Activated T-helper 2 cell treated with anti-CD3 and anti-CD28 coated beads, Interferon-gamma antibody, Interleukin-2, Interleukin-4, amounts not matched to agents 10 μg/mL and 5 μg/mL and 100 μg/mL, durations not matched to agents 14 hours and 24 hours and 36 hours (primary cell): ENCODE measurements at regions of chr17 and their contacts with region 1.

Region 1: GRCh38 chr17:81917565-81918332 is at the start of gene SIRT7:
- DNase-seq: peak; percentile 76
- H3K4me3 Mint-ChIP-seq: peak within 1 kb of the TSS; percentile 92
- H3K27ac Mint-ChIP-seq: peak within 1 kb of the TSS; percentile 78
- H3K4me1 Mint-ChIP-seq: peaks cover 18% of the 10 kb centered on the region
- H3K27me3 Mint-ChIP-seq: no peaks in the 10 kb centered on the region
- total RNA-seq, gene SIRT7: 50.2 and 55.7 TPM in 2 replicates

Region 2: GRCh38 chr17:81440876-81441244 is 476.9 kb before region 1 on chr17:
- intact Hi-C with region 1: no loop called
- DNase-seq: no peak
- H3K4me3 Mint-ChIP-seq: no peak overlapping the region
- H3K27ac Mint-ChIP-seq: no peak overlapping the region
- H3K4me1 Mint-ChIP-seq: no peaks in the 10 kb centered on the region
- H3K27me3 Mint-ChIP-seq: no peaks in the 10 kb centered on the region

Region 3: GRCh38 chr17:81890447-81891299 is 27.1 kb before region 1 on chr17:
- intact Hi-C with region 1: loop called (anchors 2 kb)
- DNase-seq: no peak
- H3K4me3 Mint-ChIP-seq: peak overlapping the region; percentile 88
- H3K27ac Mint-ChIP-seq: peak overlapping the region; percentile 92
- H3K4me1 Mint-ChIP-seq: peaks cover 18% of the 10 kb centered on the region
- H3K27me3 Mint-ChIP-seq: no peaks in the 10 kb centered on the region

Region 4: DNA sequence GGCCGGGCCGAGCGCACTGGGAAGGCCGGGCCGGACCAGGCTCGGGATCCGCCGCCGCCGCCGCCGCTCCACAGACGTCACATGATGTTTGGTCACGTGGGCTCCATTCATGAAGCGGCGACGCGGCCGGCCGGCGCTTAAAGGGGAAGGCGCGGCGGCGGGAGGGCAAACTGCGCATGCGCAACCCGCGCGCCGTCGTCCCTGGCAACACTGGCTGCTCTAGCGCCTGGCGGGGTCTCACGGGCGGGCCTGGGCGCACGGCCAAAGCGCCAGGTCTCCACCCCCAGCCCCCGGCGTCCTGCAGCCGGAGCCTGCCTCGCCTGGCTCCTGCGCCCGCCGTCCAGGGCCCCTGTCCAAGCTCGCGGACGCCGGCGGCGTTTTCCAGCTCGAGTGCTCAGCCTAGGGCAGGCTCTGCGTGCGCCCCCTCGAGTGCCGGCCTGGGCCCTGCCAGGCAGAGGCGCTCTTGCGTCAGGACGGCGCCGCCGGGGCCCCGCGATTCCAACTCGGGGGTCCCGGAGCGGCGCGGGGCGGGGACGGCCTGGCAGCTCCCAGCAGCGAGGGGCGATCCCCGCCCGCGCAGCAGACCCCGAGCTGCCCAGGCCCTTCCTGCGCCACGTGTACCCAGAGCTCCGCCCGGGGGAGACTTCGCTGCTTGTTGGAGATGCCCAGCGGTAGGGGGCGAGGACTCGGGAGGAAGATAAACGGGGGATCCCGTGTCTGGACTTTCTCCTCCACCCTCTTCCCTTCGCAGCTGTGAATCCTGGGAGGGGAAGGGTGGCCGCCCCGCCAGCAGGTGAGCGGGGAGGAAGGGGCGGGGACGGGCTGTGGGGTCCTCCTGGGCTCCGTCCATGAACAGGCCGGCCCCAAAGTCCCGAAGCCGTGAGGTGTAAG is 10.1 kb after region 1 on chr17 and contains the start of gene MAFG:
- intact Hi-C with region 1: loop called (anchors 1 kb)
- DNase-seq: peak; percentile 87
- H3K4me3 Mint-ChIP-seq: peak within 1 kb of the TSS; percentile 90
- H3K27ac Mint-ChIP-seq: peak within 1 kb of the TSS; percentile 82
- H3K4me1 Mint-ChIP-seq: peaks cover 14% of the 10 kb centered on the region
- H3K27me3 Mint-ChIP-seq: peaks cover 2% of the 10 kb centered on the region
- total RNA-seq, gene MAFG: 30.3 and 31.8 TPM in 2 replicates